Astrocyte of the cerebellum (primary cell): ENCODE measurements at regions of chr2 and their contacts with region 1.

Region 1: DNA sequence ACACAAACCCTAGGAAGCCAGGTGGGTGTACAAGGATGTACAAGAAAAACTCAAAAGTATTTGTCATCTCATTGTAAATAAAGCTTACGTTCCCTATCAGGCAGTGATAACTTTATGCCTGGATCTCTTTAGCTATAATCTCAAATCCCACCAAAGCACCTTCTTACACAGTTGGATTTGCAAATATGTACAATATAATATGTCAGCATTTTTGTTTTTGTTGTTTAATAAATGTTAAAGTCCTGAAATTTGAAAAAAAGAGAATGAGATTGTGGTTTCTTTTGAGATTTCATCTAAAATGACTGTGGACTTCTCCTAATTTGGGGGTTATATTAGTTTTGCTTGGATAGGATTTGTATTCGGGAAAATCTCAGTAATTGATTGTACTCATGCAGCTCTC is 81.9 kb downstream of the LRRTM1 start:
- DNase-seq: no peak
- H3K4me3 ChIP-seq: no peak overlapping the region
- CTCF ChIP-seq: no peak

Region 2: GRCh38 chr2:80141007-80141726 is 81.5 kb before region 1 on chr2:
- in situ Hi-C with region 1: no loop called
- DNase-seq: no peak
- H3K4me3 ChIP-seq: no peak overlapping the region
- CTCF ChIP-seq: no peak

Region 3: DNA sequence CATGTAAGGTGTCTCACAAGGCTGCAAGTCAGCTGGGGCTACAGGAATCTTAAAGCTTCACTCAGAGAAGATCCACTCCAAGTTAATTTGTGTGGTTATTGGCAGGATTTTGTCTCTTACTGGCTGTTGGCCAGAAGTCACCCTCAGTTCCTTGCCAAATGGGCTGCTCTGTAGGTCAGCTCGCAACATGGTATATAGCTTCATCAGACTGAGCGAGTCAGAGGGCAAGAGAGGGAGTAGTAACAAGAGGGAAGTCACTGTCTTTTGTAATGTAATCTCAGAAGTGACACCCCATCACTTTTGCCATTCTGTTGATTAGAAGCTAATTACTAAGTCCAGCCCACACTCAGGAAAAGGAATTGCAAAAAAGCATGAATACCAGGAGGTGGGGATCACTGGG is 37.6 kb before region 1 on chr2:
- in situ Hi-C with region 1: loop called (anchors 5 kb)
- DNase-seq: no peak
- H3K4me3 ChIP-seq: no peak overlapping the region
- CTCF ChIP-seq: no peak

Region 4: GRCh38 chr2:80266231-80266630 is 43.6 kb after region 1 on chr2:
- in situ Hi-C with region 1: no loop called
- DNase-seq: no peak
- H3K4me3 ChIP-seq: no peak overlapping the region
- CTCF ChIP-seq: no peak